ENCODE measurements at regions of chr7 and their contacts with region 1.

Region 1: DNA sequence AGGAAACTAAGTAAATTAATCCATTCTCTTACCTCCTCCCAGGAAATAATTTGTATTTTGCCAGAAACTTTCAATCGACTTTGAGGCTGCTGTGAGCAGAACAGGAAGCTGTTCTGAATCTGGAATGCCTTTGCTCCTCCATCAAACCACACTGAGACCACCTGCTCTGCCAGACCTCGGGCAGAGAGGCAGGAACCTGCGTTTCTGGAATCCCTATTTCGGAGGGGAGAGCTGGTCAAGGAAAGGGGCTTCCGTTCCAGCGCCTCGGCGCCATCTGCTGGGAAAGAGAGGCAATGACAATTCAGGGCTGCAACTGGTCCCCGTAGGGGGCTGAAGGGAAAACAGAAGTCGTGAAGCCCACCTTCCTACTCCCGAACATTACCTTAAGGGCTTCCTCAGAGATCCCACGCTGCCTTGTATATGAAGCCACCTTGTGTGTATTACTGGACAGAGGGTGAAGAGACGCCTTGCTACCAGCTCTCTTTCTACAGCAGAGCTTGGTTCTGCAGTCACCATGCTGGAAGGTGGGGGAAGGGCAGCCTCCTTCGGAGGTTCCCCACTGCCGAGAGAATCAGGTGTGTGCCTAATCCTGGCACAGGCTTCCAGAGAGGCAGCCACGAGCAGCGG is 31.2 kb downstream of the ZNF467 start:
- DNase-seq: peak; percentile 88
- ATAC-seq: peak; percentile 96
- H3K4me3 Mint-ChIP-seq: peak overlapping the region; percentile 73
- H3K27ac Mint-ChIP-seq: no peak overlapping the region
- H3K4me1 Mint-ChIP-seq: peaks cover 3% of the 10 kb centered on the region
- H3K27me3 Mint-ChIP-seq: peaks cover 15% of the 10 kb centered on the region
- CTCF ChIP-seq: peak; percentile 75

Region 2: GRCh38 chr7:149670288-149670687 is 71.9 kb before region 1 on chr7:
- CTCF ChIA-PET with region 1: interaction called, 13 read pairs
- POLR2A ChIA-PET with region 1: no interaction called
- DNase-seq: no peak
- ATAC-seq: no peak
- H3K4me3 Mint-ChIP-seq: no peak overlapping the region
- H3K27ac Mint-ChIP-seq: no peak overlapping the region
- H3K4me1 Mint-ChIP-seq: peaks cover 2% of the 10 kb centered on the region; the same call in 1 of the 2 replicates
- H3K27me3 Mint-ChIP-seq: no peaks in the 10 kb centered on the region; the same call in 1 of the 2 replicates
- CTCF ChIP-seq: no peak

Region 3: GRCh38 chr7:149707448-149707886 is 34.7 kb before region 1 on chr7:
- CTCF ChIA-PET with region 1: interaction called, 28 read pairs
- POLR2A ChIA-PET with region 1: no interaction called
- DNase-seq: no peak
- ATAC-seq: no peak
- H3K4me3 Mint-ChIP-seq: no peak overlapping the region
- H3K27ac Mint-ChIP-seq: no peak overlapping the region
- H3K4me1 Mint-ChIP-seq: peaks cover 24% of the 10 kb centered on the region
- H3K27me3 Mint-ChIP-seq: peaks cover 12% of the 10 kb centered on the region
- CTCF ChIP-seq: no peak

Region 4: DNA sequence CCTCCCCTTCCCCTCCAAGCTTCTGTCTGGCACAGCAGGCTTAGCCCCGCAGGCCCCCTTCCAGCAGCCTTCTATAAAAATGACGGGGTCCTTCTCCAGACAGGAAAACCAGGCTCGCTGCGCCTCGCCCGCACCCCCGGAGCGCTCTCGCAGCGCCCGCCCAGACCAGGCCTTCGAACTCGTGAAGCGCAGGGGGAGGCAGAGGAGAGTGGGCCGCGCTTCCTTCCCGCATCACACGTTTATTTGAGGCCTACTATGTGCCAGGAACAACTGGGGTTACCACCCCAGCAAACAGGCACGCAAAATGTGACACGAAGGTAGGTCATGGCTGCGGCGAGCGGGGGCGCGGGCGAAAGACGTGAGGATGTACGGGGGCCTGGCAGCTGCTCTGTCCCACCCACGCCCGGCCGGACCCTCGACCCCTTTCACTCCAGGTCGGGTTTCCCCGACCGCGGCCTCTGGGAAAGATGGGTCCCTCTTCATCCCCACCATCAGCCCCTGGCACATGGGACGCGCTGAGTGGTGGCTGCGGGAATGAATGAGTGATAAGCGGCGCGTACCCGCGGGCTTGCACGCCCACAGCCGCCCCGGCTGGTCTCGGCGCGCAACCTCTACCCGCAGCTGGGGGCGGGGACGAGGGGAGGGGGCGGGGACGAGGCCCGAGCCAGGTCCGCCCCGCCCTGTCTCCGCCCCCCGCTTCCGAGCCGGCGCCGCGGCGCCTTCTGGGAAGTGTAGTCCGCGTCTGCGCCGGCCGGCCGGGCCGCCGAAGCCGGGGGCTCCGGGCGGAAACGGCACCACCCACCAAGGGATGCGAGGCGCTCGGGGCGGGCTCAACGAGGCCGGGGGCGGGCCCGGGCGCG is 27.9 kb before region 1 on chr7:
- CTCF ChIA-PET with region 1: interaction called, 15 read pairs
- POLR2A ChIA-PET with region 1: no interaction called
- DNase-seq: peak; percentile 94
- ATAC-seq: peak; percentile 94
- H3K4me3 Mint-ChIP-seq: peak overlapping the region; percentile 79
- H3K27ac Mint-ChIP-seq: no peak overlapping the region
- H3K4me1 Mint-ChIP-seq: peaks cover 14% of the 10 kb centered on the region
- H3K27me3 Mint-ChIP-seq: peaks cover 28% of the 10 kb centered on the region
- CTCF ChIP-seq: no peak

Region 5: DNA sequence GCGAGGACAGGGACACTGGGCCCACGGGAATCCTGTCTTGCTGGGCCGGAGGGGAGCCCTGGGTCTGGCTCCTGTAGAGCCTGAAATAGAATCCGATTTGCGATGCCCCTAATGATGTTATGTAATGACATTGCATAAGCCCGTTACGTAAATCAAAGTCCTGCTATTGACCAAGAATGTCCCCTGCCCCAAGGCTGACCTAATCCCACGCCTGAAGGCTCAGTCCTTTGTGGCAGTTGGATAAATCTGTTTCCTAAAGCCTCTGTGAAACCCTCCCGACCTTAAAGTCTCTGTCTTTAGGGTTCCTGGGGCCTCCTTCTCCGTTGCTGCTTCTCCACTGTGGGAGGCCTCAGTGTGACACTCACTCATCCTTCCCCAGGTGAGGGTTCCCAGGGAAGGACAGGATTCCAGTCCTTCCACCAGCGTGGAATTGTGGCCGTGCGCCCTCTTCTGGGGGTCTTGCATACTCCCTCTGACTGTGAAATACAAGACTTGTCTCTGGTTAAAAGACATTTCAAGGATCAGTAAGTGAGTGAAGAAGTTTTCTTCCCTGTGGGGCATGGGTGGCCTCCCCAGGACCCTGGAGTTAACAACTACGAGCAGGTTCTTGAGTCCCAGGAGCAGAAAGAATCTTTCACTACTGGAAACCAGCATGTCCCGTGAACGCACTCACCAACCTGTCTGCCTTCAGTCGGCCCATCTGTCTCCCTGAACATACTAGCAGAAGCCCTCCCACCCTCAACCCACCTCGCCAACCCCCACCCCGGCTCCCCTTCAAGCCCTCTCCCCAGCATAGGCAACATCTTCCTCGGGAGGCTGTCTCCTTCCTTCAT is 11.4 kb after region 1 on chr7:
- CTCF ChIA-PET with region 1: interaction called, 32 read pairs
- POLR2A ChIA-PET with region 1: no interaction called
- DNase-seq: peak; percentile 79
- ATAC-seq: peak; percentile 86
- H3K4me3 Mint-ChIP-seq: no peak overlapping the region
- H3K27ac Mint-ChIP-seq: no peak overlapping the region
- H3K4me1 Mint-ChIP-seq: no peaks in the 10 kb centered on the region; the same call in 1 of the 2 replicates
- H3K27me3 Mint-ChIP-seq: peaks cover 17% of the 10 kb centered on the region
- CTCF ChIP-seq: peak; percentile 63

Measured in WTC11 (cell line).